Endothelial cell of umbilical vein (primary cell): ENCODE measurements at regions of chr2 and their contacts with region 1.

Region 1: GRCh38 chr2:204842661-204843485 is 297.6 kb downstream of the PARD3B start:
- DNase-seq: peak; percentile 92
- H3K4me3 ChIP-seq: peak overlapping the region in 1 of 3 experiments; percentile 15
- H3K27ac ChIP-seq: peak overlapping the region; percentile 84
- H3K4me1 ChIP-seq: peaks cover 25% of the 10 kb centered on the region
- H3K27me3 ChIP-seq: no peaks in the 10 kb centered on the region
- CTCF ChIP-seq: no peak
- POLR2A ChIP-seq: no peak

Region 2: GRCh38 chr2:204260162-204260877 is 582.6 kb before region 1 on chr2:
- CTCF ChIA-PET with region 1: no interaction called
- POLR2A ChIA-PET with region 1: no interaction called
- dilution Hi-C with region 1: no loop called
- intact Hi-C with region 1: loop called (anchors 10 kb)
- DNase-seq: peak; percentile 86
- H3K4me3 ChIP-seq: no peak overlapping the region
- H3K27ac ChIP-seq: no peak overlapping the region
- H3K4me1 ChIP-seq: peaks cover 6% of the 10 kb centered on the region
- H3K27me3 ChIP-seq: peaks cover 0 to 2% of the 10 kb centered on the region in 2 experiments
- CTCF ChIP-seq: peak; percentile 63 to 72
- POLR2A ChIP-seq: no peak

Region 3: DNA sequence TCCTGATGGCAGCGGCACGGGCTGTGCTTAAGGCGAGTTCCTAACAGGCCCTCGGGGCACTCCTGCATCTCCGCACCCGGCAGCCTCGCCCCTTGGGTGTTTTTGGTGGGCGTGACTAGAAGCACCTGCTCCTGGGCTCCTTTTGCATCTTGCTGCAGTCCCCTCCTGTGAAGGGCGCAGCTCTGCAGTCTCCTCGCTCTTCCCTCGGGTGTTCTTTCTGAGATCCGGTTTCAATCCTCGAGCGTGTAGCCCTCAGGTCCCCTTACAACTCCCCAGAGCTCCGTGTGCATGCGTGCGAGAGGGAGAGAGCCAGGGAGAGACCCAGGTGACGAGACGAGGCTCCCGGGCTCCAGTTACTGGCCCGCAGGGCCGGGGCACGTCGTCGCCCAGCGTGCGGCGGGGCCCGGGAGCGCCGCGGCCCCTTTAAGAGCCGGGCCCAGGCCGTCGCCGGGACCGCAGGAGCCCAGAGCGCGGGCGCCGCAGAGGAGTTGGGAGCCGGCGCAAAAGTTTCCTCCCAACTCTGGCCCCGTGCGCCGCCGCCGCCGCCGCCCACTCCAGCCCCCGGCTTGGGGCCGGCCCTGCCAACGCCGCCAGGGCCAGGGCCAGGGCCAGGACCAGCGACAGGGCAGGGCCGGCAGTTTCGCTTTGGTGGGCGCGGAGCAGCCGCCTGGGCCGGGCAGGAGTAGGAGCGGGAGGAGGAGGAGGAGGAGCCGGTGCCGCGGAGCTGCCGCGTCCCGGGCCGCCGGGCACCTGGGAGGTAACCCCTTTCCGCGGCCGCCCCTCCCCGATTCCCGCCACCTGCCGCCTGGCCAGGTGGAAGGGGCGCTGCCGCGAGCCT is 297.6 kb before region 1 on chr2 and contains the start of gene PARD3B:
- CTCF ChIA-PET with region 1: no interaction called
- POLR2A ChIA-PET with region 1: no interaction called
- dilution Hi-C with region 1: no loop called
- intact Hi-C with region 1: loop called (anchors 10 kb)
- DNase-seq: peak; percentile 74
- H3K4me3 ChIP-seq: peak within 1 kb of the TSS; percentile 78 to 90 (median 87)
- H3K27ac ChIP-seq: peak within 1 kb of the TSS; percentile 67
- H3K4me1 ChIP-seq: peaks cover 22% of the 10 kb centered on the region
- H3K27me3 ChIP-seq: no peaks in the 10 kb centered on the region
- CTCF ChIP-seq: no peak
- POLR2A ChIP-seq: no peak
- total RNA-seq, gene PARD3B: 17.7 and 30.9 TPM in 2 replicates

Region 4: GRCh38 chr2:204763974-204764703 is 78.7 kb before region 1 on chr2:
- CTCF ChIA-PET with region 1: no interaction called
- POLR2A ChIA-PET with region 1: no interaction called
- dilution Hi-C with region 1: no loop called
- intact Hi-C with region 1: no loop called
- DNase-seq: peak; percentile 4
- H3K4me3 ChIP-seq: no peak overlapping the region
- H3K27ac ChIP-seq: no peak overlapping the region
- H3K4me1 ChIP-seq: no peaks in the 10 kb centered on the region
- H3K27me3 ChIP-seq: no peaks in the 10 kb centered on the region
- CTCF ChIP-seq: no peak
- POLR2A ChIP-seq: no peak

Region 5: DNA sequence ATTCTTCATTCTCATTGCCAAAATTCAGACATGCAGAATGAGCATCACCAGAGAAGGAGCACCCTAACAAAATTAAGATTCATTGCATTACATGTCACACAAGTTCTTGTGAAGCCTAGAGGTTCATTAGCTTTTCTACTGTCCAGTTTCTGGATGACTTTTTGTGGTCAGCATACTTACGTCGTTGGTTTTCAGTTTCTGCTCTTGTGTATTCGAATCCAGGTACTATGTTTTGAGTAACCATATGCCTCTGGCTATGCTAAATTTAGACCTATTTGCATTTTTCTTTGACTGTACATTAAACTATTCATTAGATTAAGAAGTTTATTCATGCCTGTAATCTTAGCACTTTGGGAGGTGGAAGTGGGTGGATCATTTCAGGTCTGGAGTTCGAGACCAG is 46.3 kb before region 1 on chr2:
- CTCF ChIA-PET with region 1: no interaction called
- POLR2A ChIA-PET with region 1: no interaction called
- dilution Hi-C with region 1: no loop called
- intact Hi-C with region 1: loop called (anchors 1 kb)
- DNase-seq: no peak
- H3K4me3 ChIP-seq: no peak overlapping the region
- H3K27ac ChIP-seq: no peak overlapping the region
- H3K4me1 ChIP-seq: peaks cover 22% of the 10 kb centered on the region
- H3K27me3 ChIP-seq: no peaks in the 10 kb centered on the region
- CTCF ChIP-seq: no peak
- POLR2A ChIP-seq: no peak